ENCODE measurements at regions of chr11 and their contacts with region 1.

Region 1: GRCh38 chr11:123020968-123021367 is 39.3 kb upstream of the BSX start:
- DNase-seq: peak; percentile 84
- H3K4me3 ChIP-seq: no peak overlapping the region
- H3K27ac ChIP-seq: no peak overlapping the region
- H3K4me1 ChIP-seq: no peaks in the 10 kb centered on the region
- H3K27me3 ChIP-seq: peaks cover 8% of the 10 kb centered on the region; the same call in 1 of the 2 replicates

Region 2: DNA sequence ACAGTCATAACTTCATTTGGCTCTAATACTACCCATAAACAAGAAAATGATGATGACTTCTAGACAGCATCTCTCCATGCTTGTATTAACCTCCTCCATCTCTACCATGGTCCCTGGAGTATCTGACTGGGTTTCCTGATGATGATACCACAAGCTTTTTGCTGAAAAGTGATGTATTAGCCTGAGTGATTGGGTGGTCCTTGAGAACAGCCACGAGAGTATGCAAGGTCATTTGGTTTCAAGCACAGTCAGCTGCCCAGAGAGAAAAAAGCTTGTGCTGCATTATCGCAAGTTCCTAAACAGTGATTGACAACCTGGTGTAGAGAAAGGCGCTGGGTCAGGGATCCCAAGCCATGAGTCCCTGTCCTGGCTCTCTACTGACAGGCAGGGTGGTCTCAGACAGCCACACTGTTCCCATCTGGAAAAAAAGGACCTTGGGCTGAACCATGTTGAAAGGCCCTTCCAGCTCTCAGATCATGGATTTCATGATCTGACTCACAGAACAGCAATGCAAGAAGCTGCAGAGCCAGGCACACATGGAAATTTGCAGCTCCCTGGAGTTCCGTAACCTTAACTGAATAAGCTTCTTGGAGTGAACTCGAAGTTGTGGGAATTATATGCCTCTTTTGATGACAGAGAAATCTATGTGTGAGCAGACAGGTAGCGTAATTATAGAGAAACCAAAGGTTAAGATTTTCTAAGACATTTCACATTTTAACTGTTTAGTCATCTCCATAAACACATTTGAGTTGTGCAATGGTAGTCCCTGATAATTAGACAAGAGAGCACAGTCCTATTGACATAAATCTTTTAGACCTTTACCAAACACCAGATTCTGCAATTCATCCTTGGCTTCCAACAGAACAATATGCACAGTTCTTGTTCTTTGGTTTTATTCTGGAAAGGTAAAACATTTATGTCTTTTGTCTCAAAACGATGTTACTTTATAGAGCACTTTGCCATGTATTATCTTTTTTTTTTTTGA is 419.5 kb before region 1 on chr11:
- in situ Hi-C with region 1: loop called (anchors 25 kb)
- DNase-seq: peak; percentile 90
- H3K4me3 ChIP-seq: no peak overlapping the region
- H3K27ac ChIP-seq: peak overlapping the region; percentile 49
- H3K4me1 ChIP-seq: peaks cover 22% of the 10 kb centered on the region
- H3K27me3 ChIP-seq: 0 out of 2 replicates have a peak, but pooled peaks cover 6% of the 10 kb centered on the region

Region 3: GRCh38 chr11:122671400-122671891 is 349.5 kb before region 1 on chr11:
- in situ Hi-C with region 1: no loop called
- DNase-seq: no peak
- H3K4me3 ChIP-seq: no peak overlapping the region
- H3K27ac ChIP-seq: no peak overlapping the region
- H3K4me1 ChIP-seq: 0 out of 2 replicates have a peak, but pooled peaks cover 10% of the 10 kb centered on the region
- H3K27me3 ChIP-seq: no peaks in the 10 kb centered on the region

Region 4: GRCh38 chr11:122864386-122865115 is 156.4 kb before region 1 on chr11:
- in situ Hi-C with region 1: loop called (anchors 5 kb)
- DNase-seq: no peak
- H3K4me3 ChIP-seq: no peak overlapping the region
- H3K27ac ChIP-seq: no peak overlapping the region
- H3K4me1 ChIP-seq: no peaks in the 10 kb centered on the region
- H3K27me3 ChIP-seq: no peaks in the 10 kb centered on the region